ENCODE measurements at regions of chr14 and their contacts with region 1.

Region 1: DNA sequence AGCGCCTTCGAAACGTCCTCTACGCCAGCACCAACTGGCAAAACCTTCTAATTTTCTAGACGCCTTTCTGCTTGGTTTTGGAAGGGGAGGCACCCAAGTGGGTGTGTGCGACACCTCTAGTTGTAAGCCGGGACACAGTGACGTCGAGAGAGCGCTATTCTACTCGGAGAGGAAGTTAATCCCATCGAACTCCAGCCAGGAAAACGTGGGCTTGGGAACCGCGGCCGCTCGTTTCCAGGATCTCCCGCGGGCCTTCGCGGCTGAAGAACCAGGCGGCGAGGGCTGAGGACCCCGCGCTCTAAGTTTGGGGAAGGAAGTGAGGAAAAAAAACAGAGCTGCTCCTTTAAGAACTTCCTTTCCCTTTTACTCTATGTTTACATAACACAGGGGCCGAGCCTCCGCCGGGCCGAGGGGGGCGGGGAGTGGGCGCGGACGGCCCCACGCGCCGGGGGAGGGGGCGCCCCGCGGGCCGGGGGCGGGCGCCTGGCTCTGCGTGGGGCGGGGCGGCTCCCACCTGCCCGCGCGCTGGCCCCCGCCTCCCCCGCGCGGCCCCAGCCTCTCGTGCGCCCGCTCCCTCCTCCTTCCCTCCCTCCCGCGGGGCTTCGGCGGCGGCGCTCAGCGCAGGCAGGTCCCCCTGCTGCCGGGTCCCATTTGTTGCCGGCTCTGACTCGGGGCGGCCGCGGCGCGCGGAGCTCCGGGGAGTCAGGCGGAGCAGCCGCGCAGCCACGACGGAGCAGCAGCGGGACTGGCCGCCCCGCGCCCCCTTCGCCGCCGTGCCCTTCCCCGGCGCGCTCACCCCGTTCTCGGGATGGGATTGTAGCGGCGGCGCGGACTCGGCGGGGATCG is at the start of gene PELI2:
- DNase-seq: peak; percentile 72 to 95 (median 82)
- ATAC-seq: peak; percentile 81
- H3K4me3 ChIP-seq: peak within 1 kb of the TSS; percentile 75
- H3K4me3 Mint-ChIP-seq: peak within 1 kb of the TSS; percentile 95
- H3K27ac ChIP-seq: peak within 1 kb of the TSS; percentile 91 to 94
- H3K27ac Mint-ChIP-seq: peak within 1 kb of the TSS; percentile 82
- H3K4me1 ChIP-seq: peaks cover 27% of the 10 kb centered on the region
- H3K4me1 Mint-ChIP-seq: peaks cover 52% of the 10 kb centered on the region
- H3K27me3 ChIP-seq: peaks cover 0 to 9% of the 10 kb centered on the region in 2 experiments
- H3K27me3 Mint-ChIP-seq: peaks cover 8% of the 10 kb centered on the region
- CTCF ChIP-seq: no peak
- total RNA-seq, gene PELI2: 12.2 to 15.9 TPM

Region 2: GRCh38 chr14:55265197-55265596 is 852.8 kb before region 1 on chr14:
- CTCF ChIA-PET with region 1: no interaction called
- POLR2A ChIA-PET with region 1: no interaction called
- intact Hi-C with region 1: loop called in 1 of 2 experiments (anchors 10 kb)
- DNase-seq: peak in 2 of 14 experiments; percentile 53 to 66
- ATAC-seq: peak; percentile 34
- H3K4me3 ChIP-seq: no peak overlapping the region
- H3K4me3 Mint-ChIP-seq: no peak overlapping the region
- H3K27ac ChIP-seq: no peak overlapping the region
- H3K27ac Mint-ChIP-seq: no peak overlapping the region
- H3K4me1 ChIP-seq: no peaks in the 10 kb centered on the region
- H3K4me1 Mint-ChIP-seq: peaks cover under 1% of the 10 kb centered on the region
- H3K27me3 ChIP-seq: no peaks in the 10 kb centered on the region
- H3K27me3 Mint-ChIP-seq: no peaks in the 10 kb centered on the region
- CTCF ChIP-seq: no peak

Region 3: GRCh38 chr14:55819610-55820304 is 298.2 kb before region 1 on chr14:
- CTCF ChIA-PET with region 1: no interaction called
- POLR2A ChIA-PET with region 1: no interaction called
- intact Hi-C with region 1: loop called in 1 of 2 experiments (anchors 10 kb)
- DNase-seq: no peak
- ATAC-seq: no peak
- H3K4me3 ChIP-seq: no peak overlapping the region
- H3K4me3 Mint-ChIP-seq: no peak overlapping the region
- H3K27ac ChIP-seq: no peak overlapping the region
- H3K27ac Mint-ChIP-seq: no peak overlapping the region
- H3K4me1 ChIP-seq: no peaks in the 10 kb centered on the region
- H3K4me1 Mint-ChIP-seq: no peaks in the 10 kb centered on the region
- H3K27me3 ChIP-seq: no peaks in the 10 kb centered on the region
- H3K27me3 Mint-ChIP-seq: peaks cover 5% of the 10 kb centered on the region
- CTCF ChIP-seq: no peak

Region 4: GRCh38 chr14:56059054-56059453 is 58.9 kb before region 1 on chr14:
- CTCF ChIA-PET with region 1: no interaction called
- POLR2A ChIA-PET with region 1: interaction called, 3 read pairs
- intact Hi-C with region 1: loop called in 1 of 2 experiments (anchors 5 kb)
- DNase-seq: no peak
- ATAC-seq: no peak
- H3K4me3 ChIP-seq: no peak overlapping the region
- H3K4me3 Mint-ChIP-seq: no peak overlapping the region
- H3K27ac ChIP-seq: no peak overlapping the region
- H3K27ac Mint-ChIP-seq: no peak overlapping the region
- H3K4me1 ChIP-seq: no peaks in the 10 kb centered on the region
- H3K4me1 Mint-ChIP-seq: no peaks in the 10 kb centered on the region
- H3K27me3 ChIP-seq: no peaks in the 10 kb centered on the region
- H3K27me3 Mint-ChIP-seq: peaks cover 22% of the 10 kb centered on the region
- CTCF ChIP-seq: no peak

Region 5: GRCh38 chr14:56579345-56580220 is 461.6 kb after region 1 on chr14 and contains the start of gene TMEM260:
- CTCF ChIA-PET with region 1: no interaction called
- POLR2A ChIA-PET with region 1: interaction called, 3 read pairs
- intact Hi-C with region 1: loop called in 1 of 2 experiments (anchors 10 kb)
- DNase-seq: peak; percentile 84 to 95 (median 92)
- ATAC-seq: peak; percentile 92
- H3K4me3 ChIP-seq: peak within 1 kb of the TSS; percentile 72
- H3K4me3 Mint-ChIP-seq: peak within 1 kb of the TSS; percentile 89
- H3K27ac ChIP-seq: peak within 1 kb of the TSS; percentile 71 to 75
- H3K27ac Mint-ChIP-seq: peak within 1 kb of the TSS; percentile 67
- H3K4me1 ChIP-seq: peaks cover 12% of the 10 kb centered on the region
- H3K4me1 Mint-ChIP-seq: peaks cover 48% of the 10 kb centered on the region
- H3K27me3 ChIP-seq: no peaks in the 10 kb centered on the region
- H3K27me3 Mint-ChIP-seq: peaks cover 2% of the 10 kb centered on the region
- CTCF ChIP-seq: peak; percentile 91
- total RNA-seq, gene TMEM260: 8.7 to 9.2 TPM